Activated CD4-positive, alpha-beta T cell treated with anti-CD3 and anti-CD28 coated beads for 36 hours (primary cell): ENCODE measurements at regions of chr9 and their contacts with region 1.

Region 1: GRCh38 chr9:102867488-102867887 is 127.6 kb upstream of the CYLC2 start:
- DNase-seq: no peak
- ATAC-seq: no peak
- H3K4me3 Mint-ChIP-seq: no peak overlapping the region
- H3K27ac Mint-ChIP-seq: no peak overlapping the region
- H3K4me1 Mint-ChIP-seq: no peaks in the 10 kb centered on the region
- H3K27me3 Mint-ChIP-seq: no peaks in the 10 kb centered on the region

Region 2: DNA sequence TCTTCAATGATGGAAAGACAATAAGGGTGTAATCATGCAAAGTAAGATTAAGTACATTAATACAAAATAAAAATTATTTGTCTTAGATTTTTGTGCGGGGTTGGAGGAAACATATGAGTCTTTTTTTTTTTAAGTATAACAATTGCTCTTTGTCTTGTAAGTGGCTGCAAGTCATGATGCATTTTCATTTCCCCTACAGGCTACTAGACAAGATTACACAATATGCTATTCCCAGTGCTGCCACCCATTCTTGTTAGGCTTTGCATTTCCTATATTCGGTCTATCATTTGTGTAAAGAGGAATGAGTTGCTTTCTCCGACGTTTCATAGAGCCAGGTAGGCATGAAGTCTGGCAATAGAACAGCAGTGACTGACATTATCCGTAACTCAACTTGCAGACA is 166.6 kb before region 1 on chr9:
- CTCF ChIA-PET with region 1: no interaction called
- POLR2A ChIA-PET with region 1: no interaction called
- intact Hi-C with region 1: no loop called
- DNase-seq: no peak
- ATAC-seq: no peak
- H3K4me3 Mint-ChIP-seq: no peak overlapping the region
- H3K27ac Mint-ChIP-seq: no peak overlapping the region
- H3K4me1 Mint-ChIP-seq: no peaks in the 10 kb centered on the region
- H3K27me3 Mint-ChIP-seq: no peaks in the 10 kb centered on the region

Region 3: DNA sequence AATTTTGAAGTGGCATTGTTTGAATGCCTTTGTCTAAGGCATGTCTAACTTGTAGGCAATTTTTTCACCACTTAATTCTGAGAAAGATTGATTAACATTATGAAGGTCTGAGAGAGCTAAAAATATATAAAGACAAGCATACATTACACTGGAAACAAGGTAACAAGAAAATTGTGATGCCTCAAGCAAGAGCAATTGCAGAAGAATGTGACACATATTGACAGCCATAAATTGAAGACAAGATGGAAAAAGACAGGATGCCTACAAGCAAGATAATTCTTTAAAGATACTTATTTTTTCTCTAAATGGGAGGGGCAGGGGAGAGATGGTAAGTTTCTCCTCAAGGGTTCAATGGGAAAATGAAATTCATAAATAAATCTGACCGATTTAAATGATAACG is 24.5 kb after region 1 on chr9:
- CTCF ChIA-PET with region 1: no interaction called
- POLR2A ChIA-PET with region 1: no interaction called
- intact Hi-C with region 1: loop called in 1 of 2 experiments (anchors 2 kb)
- DNase-seq: no peak
- ATAC-seq: no peak
- H3K4me3 Mint-ChIP-seq: no peak overlapping the region
- H3K27ac Mint-ChIP-seq: no peak overlapping the region
- H3K4me1 Mint-ChIP-seq: no peaks in the 10 kb centered on the region
- H3K27me3 Mint-ChIP-seq: no peaks in the 10 kb centered on the region

Region 4: DNA sequence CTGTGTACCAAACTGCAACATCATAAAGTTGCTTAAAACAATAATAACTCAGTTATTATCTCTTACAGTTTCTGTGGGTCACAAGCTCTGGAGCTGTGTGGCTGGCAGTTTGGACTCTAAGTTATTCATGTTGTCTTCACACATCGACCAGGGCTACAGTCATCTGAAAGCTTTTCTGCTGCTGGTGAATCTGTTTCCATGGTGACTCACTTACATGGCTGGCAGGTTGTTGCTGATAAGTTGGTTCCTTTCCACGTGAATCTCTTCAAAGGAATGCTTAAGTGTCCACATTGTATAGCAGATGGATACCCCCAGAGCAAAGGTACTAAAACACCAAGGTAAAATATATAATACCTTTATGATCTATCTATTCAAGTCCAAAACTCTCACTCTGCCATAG is 82.9 kb after region 1 on chr9:
- CTCF ChIA-PET with region 1: no interaction called
- POLR2A ChIA-PET with region 1: no interaction called
- intact Hi-C with region 1: no loop called
- DNase-seq: no peak
- ATAC-seq: no peak
- H3K4me3 Mint-ChIP-seq: no peak overlapping the region
- H3K27ac Mint-ChIP-seq: no peak overlapping the region
- H3K4me1 Mint-ChIP-seq: no peaks in the 10 kb centered on the region
- H3K27me3 Mint-ChIP-seq: no peaks in the 10 kb centered on the region